ENCODE measurements at regions of chr14 and their contacts with region 1.

Region 1: GRCh38 chr14:72828604-72829003 is 65.3 kb downstream of the DPF3 start:
- DNase-seq: peak; percentile 63

Region 2: DNA sequence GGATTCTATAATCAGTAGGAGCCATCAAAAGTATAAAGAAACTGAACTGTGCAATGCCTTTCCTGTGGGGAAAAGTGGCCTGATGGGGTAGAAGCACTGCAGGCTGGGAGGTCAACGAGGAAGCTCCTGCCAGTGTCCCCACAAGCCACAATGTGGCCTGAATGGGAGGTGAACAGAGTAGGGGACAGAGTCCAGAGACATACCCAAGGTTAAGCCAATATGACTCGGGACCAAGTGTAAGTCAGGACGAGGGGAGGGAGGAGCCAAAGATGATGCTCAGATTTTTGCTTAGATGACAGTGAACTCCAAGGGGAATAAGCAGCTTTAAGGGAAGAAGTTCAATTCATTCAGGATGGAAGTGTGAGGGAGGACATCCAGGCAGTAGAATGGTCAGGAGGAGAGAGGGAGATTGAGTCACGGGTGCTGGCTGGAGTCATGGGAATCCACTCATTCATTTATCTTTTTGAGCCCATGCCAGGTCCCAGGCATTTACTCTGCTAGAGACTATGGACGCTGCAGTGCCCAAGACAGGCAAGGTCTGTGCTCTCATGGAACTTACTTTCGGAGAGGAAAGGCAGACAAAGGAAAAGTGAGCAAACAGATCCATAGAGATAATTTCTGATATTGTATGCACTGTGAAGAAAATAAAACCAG is 36.2 kb after region 1 on chr14:
- intact Hi-C with region 1: loop called (anchors 5 kb)
- DNase-seq: no peak